ENCODE measurements at regions of chr9 and their contacts with region 1.

Region 1: GRCh38 chr9:5628530-5629311 is at the start of gene RIC1:
- DNase-seq: peak; percentile 81
- ATAC-seq: peak; percentile 89
- H3K4me3 ChIP-seq: peak within 1 kb of the TSS; percentile 89 to 97 (median 94)
- H3K27ac ChIP-seq: peak within 1 kb of the TSS; percentile 80
- H3K4me1 ChIP-seq: peaks cover 46% of the 10 kb centered on the region
- H3K27me3 ChIP-seq: no peaks in the 10 kb centered on the region; a peak in 1 of 5 replicates
- CTCF ChIP-seq: no peak
- EP300 ChIP-seq: 0 out of 4 replicates have a peak, but pooled peaks of 1 of the 2 experiments have one; percentile 8
- POLR2A ChIP-seq: peak; percentile 79 to 83
- RAD21 ChIP-seq: no peak
- total RNA-seq, gene RIC1: 19.0 and 21.2 TPM in 2 replicates

Region 2: DNA sequence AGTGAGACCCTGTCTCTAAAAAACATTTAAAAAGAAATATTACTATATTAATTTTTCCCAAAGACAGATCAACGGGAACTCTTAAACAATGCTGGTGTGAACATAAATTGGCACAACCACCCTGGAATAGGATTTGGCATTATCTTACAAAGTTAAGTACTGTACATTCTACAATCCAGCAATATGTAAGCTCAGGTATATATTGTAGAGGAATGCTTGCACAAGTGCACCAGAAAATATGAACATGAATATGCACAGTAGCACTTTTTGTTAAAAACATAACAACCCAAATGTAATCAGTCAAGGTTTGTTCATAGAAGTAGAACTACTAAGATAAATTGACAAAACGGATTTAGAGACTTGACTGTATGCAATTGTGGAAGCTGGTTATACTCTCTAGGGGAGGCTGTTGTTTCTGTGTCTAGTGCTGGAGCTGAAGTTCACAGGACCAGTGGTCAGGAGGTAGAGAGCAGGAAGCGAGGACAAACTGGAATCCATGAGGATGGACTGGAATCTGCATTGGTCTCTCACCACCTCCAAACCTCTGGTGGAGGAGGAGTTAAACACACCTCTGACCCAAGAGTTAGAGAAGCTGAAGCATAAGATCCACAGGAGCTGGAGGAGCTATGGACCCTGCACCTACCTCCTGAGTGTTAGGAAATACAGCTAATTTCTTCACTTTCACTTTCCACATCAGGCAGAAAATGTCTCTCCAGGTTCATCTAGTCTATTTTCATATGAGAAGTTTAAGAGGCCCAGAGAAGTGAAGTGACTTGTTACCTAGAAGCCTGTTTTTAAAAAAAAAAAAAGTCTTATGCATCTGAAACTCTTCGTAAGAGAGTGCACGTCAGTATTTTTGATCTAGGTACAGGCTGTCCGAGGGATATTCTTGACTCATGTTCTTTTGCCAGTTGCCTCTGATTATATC is 20.2 kb before region 1 on chr9:
- CTCF ChIA-PET with region 1: no interaction called
- POLR2A ChIA-PET with region 1: interaction called, 12 read pairs
- in situ Hi-C with region 1: no loop called
- intact Hi-C with region 1: no loop called
- DNase-seq: peak; percentile 49
- ATAC-seq: peak; percentile 99
- H3K4me3 ChIP-seq: peak overlapping the region; percentile 52 to 76 (median 66)
- H3K27ac ChIP-seq: peak overlapping the region; percentile 5
- H3K4me1 ChIP-seq: peaks cover 5% of the 10 kb centered on the region
- H3K27me3 ChIP-seq: no peaks in the 10 kb centered on the region
- CTCF ChIP-seq: peak; percentile 58
- EP300 ChIP-seq: no peak
- POLR2A ChIP-seq: no peak
- RAD21 ChIP-seq: no peak

Region 3: GRCh38 chr9:5714501-5715401 is 86.0 kb after region 1 on chr9:
- CTCF ChIA-PET with region 1: no interaction called
- POLR2A ChIA-PET with region 1: interaction called, 4 read pairs
- in situ Hi-C with region 1: no loop called
- intact Hi-C with region 1: loop called (anchors 2 kb)
- DNase-seq: peak; percentile 25
- ATAC-seq: peak; percentile 51
- H3K4me3 ChIP-seq: no peak overlapping the region
- H3K27ac ChIP-seq: no peak overlapping the region
- H3K4me1 ChIP-seq: peaks cover 38% of the 10 kb centered on the region
- H3K27me3 ChIP-seq: no peaks in the 10 kb centered on the region
- CTCF ChIP-seq: peak; percentile 35
- EP300 ChIP-seq: no peak
- POLR2A ChIP-seq: no peak
- RAD21 ChIP-seq: peak; percentile 21; the same call in 1 of the 2 replicates

Region 4: GRCh38 chr9:5832543-5833529 is 204.1 kb after region 1 on chr9 and contains the start of gene ERMP1:
- CTCF ChIA-PET with region 1: no interaction called
- POLR2A ChIA-PET with region 1: interaction called, 12 read pairs
- in situ Hi-C with region 1: no loop called
- intact Hi-C with region 1: no loop called
- DNase-seq: peak; percentile 71
- ATAC-seq: peak; percentile 85
- H3K4me3 ChIP-seq: peak within 1 kb of the TSS; percentile 70 to 87 (median 73)
- H3K27ac ChIP-seq: peak within 1 kb of the TSS; percentile 90
- H3K4me1 ChIP-seq: peaks cover 66% of the 10 kb centered on the region
- H3K27me3 ChIP-seq: no peaks in the 10 kb centered on the region
- CTCF ChIP-seq: peak; percentile 94
- EP300 ChIP-seq: no peak
- POLR2A ChIP-seq: peak; percentile 74 to 77
- RAD21 ChIP-seq: peak; percentile 79
- total RNA-seq, gene ERMP1: 28.1 and 40.9 TPM in 2 replicates

Region 5: DNA sequence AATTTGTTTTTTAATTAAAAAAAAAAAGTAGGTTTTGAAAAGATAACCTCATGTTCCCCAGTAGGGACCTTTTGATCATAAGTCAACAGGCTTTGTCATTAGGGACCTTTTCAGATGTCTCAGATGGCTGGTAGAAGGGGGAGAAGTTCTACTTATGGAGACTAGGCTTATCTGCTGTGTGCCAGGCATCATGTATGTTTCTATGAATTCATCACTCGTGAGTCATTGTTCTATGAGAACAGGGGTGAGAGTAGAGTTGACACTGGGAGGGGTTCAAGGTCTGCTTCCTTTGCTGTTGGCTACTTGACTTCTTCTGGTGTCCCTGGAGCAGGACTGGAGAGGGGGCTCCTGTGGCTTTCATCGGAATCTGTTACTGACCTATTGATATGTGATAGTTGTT is 1267.8 kb after region 1 on chr9:
- CTCF ChIA-PET with region 1: no interaction called
- POLR2A ChIA-PET with region 1: no interaction called
- in situ Hi-C with region 1: no loop called
- intact Hi-C with region 1: loop called (anchors 5 kb)
- DNase-seq: peak; percentile 78
- ATAC-seq: no peak
- H3K4me3 ChIP-seq: peak overlapping the region in 1 of 3 experiments; percentile 23; a peak in 1 of 6 replicates
- H3K27ac ChIP-seq: peak overlapping the region; percentile 99
- H3K4me1 ChIP-seq: peaks cover 84% of the 10 kb centered on the region
- H3K27me3 ChIP-seq: no peaks in the 10 kb centered on the region
- CTCF ChIP-seq: no peak
- EP300 ChIP-seq: peak in 1 of 2 experiments; percentile 51; a peak in 1 of 4 replicates
- POLR2A ChIP-seq: no peak
- RAD21 ChIP-seq: no peak

Region 6: GRCh38 chr9:6944093-6944551 is 1315.4 kb after region 1 on chr9:
- CTCF ChIA-PET with region 1: no interaction called
- POLR2A ChIA-PET with region 1: no interaction called
- in situ Hi-C with region 1: no loop called
- intact Hi-C with region 1: no loop called
- DNase-seq: no peak
- ATAC-seq: no peak
- H3K4me3 ChIP-seq: no peak overlapping the region
- H3K27ac ChIP-seq: no peak overlapping the region
- H3K4me1 ChIP-seq: peaks cover 9% of the 10 kb centered on the region
- H3K27me3 ChIP-seq: no peaks in the 10 kb centered on the region
- CTCF ChIP-seq: no peak
- EP300 ChIP-seq: no peak
- POLR2A ChIP-seq: no peak
- RAD21 ChIP-seq: no peak

Measured in HepG2 (cell line).